ENCODE measurements at regions of chr6 and their contacts with region 1.

Region 1: GRCh38 chr6:151313066-151313491 is 73.3 kb downstream of the AKAP12 start:
- DNase-seq: no peak
- CTCF ChIP-seq: no peak

Region 2: DNA sequence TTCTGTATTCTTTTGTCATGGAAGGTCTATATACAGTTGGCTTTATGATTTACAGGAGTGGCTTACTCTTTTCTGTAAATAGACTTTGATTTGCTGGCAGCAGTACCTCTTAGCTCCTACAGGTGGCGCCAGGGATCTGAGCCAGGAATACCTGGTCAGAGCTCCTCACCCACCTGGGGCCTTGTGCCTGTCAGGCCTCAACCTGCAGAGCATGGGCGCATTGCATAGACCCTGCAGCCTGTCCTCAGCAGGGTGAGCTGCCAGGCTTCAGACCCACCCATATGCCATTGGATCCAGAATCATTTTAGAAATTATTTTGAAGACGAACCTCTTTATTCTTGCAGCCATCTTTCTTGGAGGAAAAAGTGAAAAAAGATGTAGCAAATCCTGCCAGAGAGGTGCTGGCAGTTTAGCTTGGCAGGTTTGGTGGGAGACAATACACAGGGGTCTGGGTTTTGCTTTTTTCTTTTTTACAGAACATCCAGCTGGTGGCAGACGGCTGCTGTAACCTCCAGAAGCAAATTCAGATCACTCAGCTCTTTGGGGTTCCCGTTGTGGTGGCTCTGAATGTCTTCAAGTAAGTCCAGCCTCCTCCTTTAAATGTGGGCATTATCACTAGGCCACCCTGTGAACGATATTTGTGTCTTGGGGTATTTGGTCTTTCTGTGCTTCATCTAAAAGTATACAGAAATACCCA is 298.5 kb before region 1 on chr6:
- in situ Hi-C with region 1: loop called (anchors 5 kb)
- DNase-seq: peak; percentile 66
- CTCF ChIP-seq: peak; percentile 93

Region 3: DNA sequence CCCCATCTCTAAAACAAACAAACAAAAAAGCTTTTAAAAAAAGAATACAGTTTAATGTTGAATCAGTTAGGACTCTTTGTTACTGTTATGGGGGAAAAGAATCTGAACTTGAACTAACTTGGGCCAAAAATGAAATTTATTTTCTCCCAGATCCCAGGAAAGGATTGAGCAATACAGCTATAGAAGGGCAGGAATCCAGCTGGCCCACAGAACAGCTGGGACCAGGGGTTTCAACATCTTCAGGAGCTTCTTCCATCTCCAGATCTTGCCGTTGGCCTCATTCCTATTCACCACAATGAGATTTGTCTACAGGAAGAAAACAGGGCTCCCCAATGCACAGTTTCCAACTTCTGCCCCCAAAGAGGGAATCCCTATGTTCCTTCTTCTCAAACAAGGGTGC is 116.5 kb before region 1 on chr6:
- in situ Hi-C with region 1: no loop called
- DNase-seq: no peak
- CTCF ChIP-seq: no peak